ENCODE measurements at regions of chr3 and their contacts with region 1.

Region 1: DNA sequence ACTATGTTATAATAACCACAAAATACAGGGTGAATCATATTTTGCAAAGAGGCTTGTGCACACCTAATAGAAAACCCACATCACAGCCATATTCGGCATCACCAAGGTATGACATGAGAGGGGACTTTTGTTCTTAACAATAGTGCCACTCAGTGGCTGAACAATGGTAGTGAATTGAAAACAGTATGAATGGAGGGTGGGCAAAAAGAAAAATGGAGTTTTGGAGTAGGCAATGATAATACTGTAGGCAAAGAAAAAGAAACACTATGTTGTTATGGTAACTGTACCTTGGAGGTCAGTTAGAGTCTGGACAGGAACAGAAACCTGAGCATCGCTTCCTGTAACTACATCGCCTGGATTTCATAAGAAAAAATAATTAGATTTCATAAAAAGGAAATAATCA is 348.6 kb downstream of the PLCL2 start:
- DNase-seq: no peak
- ATAC-seq: peak; percentile 83

Region 2: DNA sequence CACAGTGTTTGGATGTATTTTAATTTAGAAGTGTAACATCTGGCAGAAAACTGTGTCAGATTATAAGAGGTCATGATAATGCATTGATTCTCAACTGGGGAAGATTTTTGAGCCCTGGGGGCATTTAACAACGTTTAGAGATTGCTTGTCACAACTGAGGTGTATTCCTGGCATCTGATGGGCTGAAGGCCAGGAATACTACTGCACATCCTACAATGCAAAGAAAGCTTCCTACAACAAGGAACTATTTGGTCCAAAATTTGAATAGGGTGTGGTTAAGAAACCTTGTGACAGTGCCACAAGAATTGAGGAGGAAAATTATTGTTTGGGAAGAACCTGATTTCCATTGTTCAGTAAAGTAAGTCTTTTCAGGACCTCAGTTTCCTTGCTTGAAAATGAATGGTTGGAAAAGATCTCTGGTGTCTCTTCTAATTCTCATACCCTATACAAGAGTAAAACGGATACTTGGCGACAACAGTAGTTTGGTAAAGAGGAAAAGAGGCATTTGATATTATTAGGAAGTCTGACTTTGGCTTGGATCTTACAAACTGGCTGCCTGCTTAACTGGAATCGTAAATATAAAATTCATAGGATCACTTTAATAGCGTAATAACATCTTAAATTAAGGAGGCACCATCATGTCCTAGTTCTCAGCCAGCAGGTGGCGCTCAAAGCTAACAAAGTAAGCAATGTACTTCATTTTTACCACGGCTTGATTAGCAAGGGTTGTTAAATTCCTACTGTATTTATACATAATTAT is 632.4 kb before region 1 on chr3:
- intact Hi-C with region 1: loop called (anchors 2 kb)
- DNase-seq: peak; percentile 87
- ATAC-seq: peak; percentile 91

Region 3: DNA sequence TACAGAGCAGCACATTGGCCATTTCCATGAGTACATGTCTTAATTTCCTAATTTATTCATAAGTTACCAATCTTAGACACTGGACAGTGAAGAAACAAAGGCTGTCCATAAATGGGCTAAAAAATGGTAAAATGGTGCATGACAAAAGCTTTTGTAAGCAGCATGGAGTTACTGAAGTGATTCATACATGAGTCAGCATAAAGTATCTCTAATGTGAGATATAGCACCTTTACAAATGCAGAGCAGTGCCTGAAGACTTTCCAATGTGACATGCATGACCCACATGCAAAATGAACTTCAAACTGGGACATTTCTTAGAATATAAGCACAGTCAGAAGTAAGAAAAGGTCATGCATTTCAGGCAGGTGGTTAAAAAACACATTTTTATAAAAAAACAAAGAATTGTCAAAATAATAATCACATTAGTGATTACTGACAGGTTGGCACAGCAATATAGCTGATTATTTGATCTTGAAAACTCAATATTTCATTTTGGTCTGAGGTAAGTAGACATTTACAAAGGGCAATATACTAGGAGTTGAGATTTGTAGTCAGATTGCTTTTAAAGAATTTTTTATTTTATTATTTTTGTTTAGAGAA is 49.3 kb before region 1 on chr3:
- intact Hi-C with region 1: loop called (anchors 2 kb)
- DNase-seq: no peak
- ATAC-seq: no peak